GM23248 (cell line): ENCODE measurements at regions of chr6 and their contacts with region 1.

Region 1: GRCh38 chr6:121055572-121056163 is 278.6 kb downstream of the TBC1D32 start:
- DNase-seq: peak; percentile 65
- H3K4me3 ChIP-seq: no peak overlapping the region
- H3K27ac ChIP-seq: no peak overlapping the region
- H3K4me1 ChIP-seq: no peaks in the 10 kb centered on the region
- H3K27me3 ChIP-seq: no peaks in the 10 kb centered on the region

Region 2: DNA sequence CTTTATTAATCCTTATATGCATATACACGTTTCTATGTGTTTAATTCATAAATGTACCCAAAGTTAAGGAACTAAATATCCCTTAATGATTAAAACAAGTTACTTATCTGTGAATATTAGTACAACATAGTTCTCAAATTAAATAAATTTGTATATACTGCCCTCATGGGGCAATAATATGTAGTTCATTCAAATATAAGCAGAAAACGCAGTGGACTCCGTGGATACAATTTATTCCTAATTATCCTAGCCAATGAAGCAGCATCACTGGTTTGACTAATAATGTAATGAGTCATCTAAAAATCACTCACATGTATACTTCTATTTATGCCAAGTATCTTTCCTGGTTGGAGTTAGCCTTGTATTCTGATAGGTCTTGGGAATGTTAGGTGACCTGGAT is 167.0 kb after region 1 on chr6:
- in situ Hi-C with region 1: loop called (anchors 5 kb)
- DNase-seq: peak; percentile 81
- H3K4me3 ChIP-seq: no peak overlapping the region
- H3K27ac ChIP-seq: no peak overlapping the region
- H3K4me1 ChIP-seq: peaks cover 4% of the 10 kb centered on the region
- H3K27me3 ChIP-seq: no peaks in the 10 kb centered on the region

Region 3: DNA sequence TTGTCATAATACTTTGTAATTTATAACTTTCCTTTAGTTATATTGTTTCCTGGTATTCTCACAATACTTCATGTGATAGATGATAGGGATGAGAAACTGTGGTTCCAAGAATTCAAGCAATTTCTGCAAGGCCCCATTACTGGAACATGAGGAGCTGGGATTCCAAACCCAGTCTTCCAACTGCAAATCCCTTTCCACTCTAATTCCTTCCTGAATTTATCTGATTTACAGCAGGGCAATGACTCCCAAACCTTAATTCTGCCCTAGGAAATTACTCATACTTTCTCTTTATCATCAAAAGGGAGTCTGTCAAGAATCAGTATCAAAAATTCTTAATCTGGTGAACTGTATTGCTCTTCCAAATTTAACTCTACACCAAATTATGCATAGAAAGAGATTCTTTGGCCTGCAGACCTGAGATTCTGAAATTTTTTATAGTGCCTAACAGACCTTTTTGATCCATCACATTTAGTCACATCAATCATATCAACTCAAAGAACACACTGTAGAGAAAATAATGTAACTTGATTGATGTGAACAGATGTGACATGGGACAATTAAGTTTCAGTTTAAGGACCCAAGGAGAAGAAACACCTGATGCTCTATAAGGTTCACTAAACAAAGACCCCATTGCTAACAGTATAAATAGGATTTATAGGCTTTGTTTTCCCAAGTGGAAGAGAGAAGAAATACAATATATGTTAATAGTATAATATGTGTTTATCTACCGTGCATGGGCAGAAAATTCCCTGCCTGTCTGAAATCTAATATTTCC is 338.2 kb after region 1 on chr6:
- in situ Hi-C with region 1: loop called (anchors 10 kb)
- DNase-seq: no peak
- H3K4me3 ChIP-seq: no peak overlapping the region
- H3K27ac ChIP-seq: no peak overlapping the region
- H3K4me1 ChIP-seq: no peaks in the 10 kb centered on the region
- H3K27me3 ChIP-seq: no peaks in the 10 kb centered on the region; the same call in 1 of the 2 replicates